Esophagus muscularis mucosa (tissue), 4 donors: ENCODE measurements at regions of chr7 and their contacts with region 1.

Region 1: DNA sequence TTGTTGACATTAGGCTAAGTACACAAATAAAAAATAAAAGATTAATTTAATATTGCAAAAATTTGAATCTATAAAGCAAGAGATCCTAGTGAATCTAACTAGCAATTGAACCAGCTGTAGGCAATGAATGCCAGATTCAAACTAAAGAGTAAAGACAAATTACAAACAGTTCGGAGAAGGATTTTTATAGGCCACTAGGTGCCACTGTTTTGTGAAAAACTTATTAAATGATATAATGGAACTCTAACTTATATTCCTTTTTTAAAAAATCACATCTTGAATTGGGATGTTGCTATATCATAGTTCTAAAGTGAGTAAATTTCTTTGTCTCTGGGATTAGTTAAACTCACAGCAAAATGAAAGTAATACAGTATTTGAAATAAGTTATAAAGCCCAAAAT is 39.1 kb upstream of the GNAI1 start:
- DNase-seq: no peak
- H3K4me3 ChIP-seq: no peak overlapping the region
- H3K27ac ChIP-seq: no peak overlapping the region
- H3K4me1 ChIP-seq: peaks cover 0 to 10% (median 0%) of the 10 kb centered on the region in 4 donors
- H3K27me3 ChIP-seq: no peaks in the 10 kb centered on the region
- CTCF ChIP-seq: peak; percentile 60 to 64 (median 63)
- EP300 ChIP-seq: no peak
- POLR2A ChIP-seq: no peak

Region 2: GRCh38 chr7:79923953-79924352 is 171.6 kb before region 1 on chr7:
- intact Hi-C with region 1: no loop called
- DNase-seq: no peak
- H3K4me3 ChIP-seq: no peak overlapping the region
- H3K27ac ChIP-seq: no peak overlapping the region
- H3K4me1 ChIP-seq: no peaks in the 10 kb centered on the region
- H3K27me3 ChIP-seq: no peaks in the 10 kb centered on the region
- CTCF ChIP-seq: no peak
- EP300 ChIP-seq: no peak
- POLR2A ChIP-seq: no peak

Region 3: DNA sequence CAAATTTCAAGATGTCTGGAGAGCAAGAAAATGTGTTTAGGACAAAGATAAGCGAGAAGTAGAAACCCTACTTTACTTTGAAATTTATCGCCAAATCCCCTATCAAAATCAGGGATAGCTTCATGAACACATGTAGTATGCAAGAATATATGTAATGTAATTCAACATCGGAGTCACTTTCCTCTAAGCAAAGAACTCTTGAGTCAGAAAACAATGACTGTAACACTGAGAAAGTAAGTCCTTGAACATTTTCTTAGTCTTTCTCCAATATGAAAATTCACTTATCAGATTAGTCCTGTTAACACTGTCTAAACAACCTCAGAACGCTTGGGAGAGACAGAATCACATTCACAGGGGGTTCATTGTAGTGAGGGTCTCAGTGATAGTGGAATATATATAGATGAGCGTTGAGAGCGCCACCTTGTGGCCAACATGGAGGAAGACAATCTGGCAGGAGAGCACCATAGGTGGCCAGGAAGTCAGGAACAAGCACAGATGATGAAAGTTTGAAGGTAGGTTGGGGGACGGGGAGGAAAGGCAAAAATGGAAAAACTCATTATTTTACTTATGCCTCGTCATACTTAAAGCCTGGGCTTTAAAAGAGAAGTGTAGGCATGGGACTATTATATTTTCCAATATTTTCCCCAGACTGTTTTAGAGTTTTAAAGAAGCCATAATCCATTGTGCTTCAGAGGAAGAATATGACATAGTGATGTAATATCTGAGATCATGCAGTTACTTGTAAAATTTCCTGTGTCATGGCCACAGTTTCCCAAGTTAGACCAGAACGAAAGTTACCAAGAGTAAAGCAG is 76.4 kb before region 1 on chr7:
- intact Hi-C with region 1: no loop called
- DNase-seq: no peak
- H3K4me3 ChIP-seq: no peak overlapping the region
- H3K27ac ChIP-seq: no peak overlapping the region
- H3K4me1 ChIP-seq: no peaks in the 10 kb centered on the region
- H3K27me3 ChIP-seq: no peaks in the 10 kb centered on the region
- CTCF ChIP-seq: peak; percentile 50 to 77 (median 65)
- EP300 ChIP-seq: no peak
- POLR2A ChIP-seq: no peak

Region 4: GRCh38 chr7:80151274-80151665 is 55.7 kb after region 1 on chr7:
- intact Hi-C with region 1: no loop called
- DNase-seq: no peak
- H3K4me3 ChIP-seq: no peak overlapping the region
- H3K27ac ChIP-seq: no peak overlapping the region
- H3K4me1 ChIP-seq: peaks cover 18 to 83% (median 69%) of the 10 kb centered on the region in 4 donors
- H3K27me3 ChIP-seq: no peaks in the 10 kb centered on the region
- CTCF ChIP-seq: no peak
- EP300 ChIP-seq: no peak
- POLR2A ChIP-seq: no peak

Region 5: DNA sequence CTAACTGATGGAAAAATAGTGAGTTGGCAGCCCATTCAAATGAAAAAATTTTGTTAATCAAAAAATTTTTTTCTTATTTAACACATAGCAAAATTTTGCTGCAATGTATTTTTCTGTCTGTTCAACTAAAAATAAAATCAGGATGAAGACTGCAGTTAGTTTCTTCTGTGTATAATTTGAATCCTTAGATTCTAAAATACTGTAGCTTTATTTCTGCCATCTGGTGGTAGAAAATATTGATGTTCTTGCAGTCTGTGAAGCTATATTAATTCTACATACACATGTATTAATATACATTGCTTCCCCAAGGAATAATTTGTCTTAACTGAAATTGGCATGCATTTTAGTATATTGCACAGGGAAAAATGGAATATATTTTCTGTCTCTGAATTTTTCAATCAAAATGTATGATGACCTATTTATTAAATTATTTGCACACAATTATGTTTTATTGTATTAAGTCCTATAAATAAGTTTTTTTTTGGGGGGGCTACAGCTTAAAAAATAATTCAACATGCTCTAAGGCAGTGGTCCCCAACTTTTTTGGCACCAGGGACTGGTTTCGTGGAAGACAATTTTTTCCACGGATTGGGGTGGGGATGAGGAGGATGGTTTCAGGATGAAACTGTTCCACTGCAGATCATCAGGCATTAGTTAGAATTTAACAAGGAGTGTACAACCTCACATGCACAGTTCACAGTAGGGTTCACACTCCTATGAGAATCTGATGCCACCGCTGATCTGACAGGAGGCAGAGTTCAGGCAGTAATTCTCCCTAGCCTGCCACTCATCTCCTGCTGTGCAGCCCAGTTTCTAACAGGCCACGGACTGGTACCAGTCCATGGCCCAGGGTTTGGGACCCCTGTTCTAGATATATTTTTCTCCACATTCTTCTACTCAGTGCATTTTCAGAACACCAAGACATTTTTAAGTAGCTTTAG is 297.0 kb after region 1 on chr7:
- intact Hi-C with region 1: loop called (anchors 10 kb)
- DNase-seq: no peak
- H3K4me3 ChIP-seq: no peak overlapping the region
- H3K27ac ChIP-seq: no peak overlapping the region
- H3K4me1 ChIP-seq: peaks cover 0 to 5% (median 2%) of the 10 kb centered on the region in 4 donors
- H3K27me3 ChIP-seq: no peaks in the 10 kb centered on the region
- CTCF ChIP-seq: peak; percentile 57 to 73 (median 65)
- EP300 ChIP-seq: no peak
- POLR2A ChIP-seq: no peak

Region 6: GRCh38 chr7:80453699-80454340 is 358.3 kb after region 1 on chr7:
- intact Hi-C with region 1: loop called (anchors 5 kb)
- DNase-seq: no peak
- H3K4me3 ChIP-seq: no peak overlapping the region
- H3K27ac ChIP-seq: no peak overlapping the region
- H3K4me1 ChIP-seq: no peaks in the 10 kb centered on the region
- H3K27me3 ChIP-seq: no peaks in the 10 kb centered on the region
- CTCF ChIP-seq: peak; percentile 51 to 60 (median 54)
- EP300 ChIP-seq: no peak
- POLR2A ChIP-seq: no peak